ENCODE measurements at regions of chr2 and their contacts with region 1.

Region 1: GRCh38 chr2:71798266-71799012 is 345.1 kb downstream of the DYSF start:
- DNase-seq: peak; percentile 10
- ATAC-seq: peak; percentile 62; the same call in 1 of the 2 replicates
- H3K4me3 ChIP-seq: no peak overlapping the region
- H3K27ac ChIP-seq: no peak overlapping the region
- H3K4me1 ChIP-seq: peaks cover 12% of the 10 kb centered on the region
- H3K27me3 ChIP-seq: peaks cover 10% of the 10 kb centered on the region
- CTCF ChIP-seq: peak; percentile 61
- POLR2A ChIP-seq: no peak
- RAD21 ChIP-seq: peak; percentile 47

Region 2: GRCh38 chr2:71995067-71995665 is 196.7 kb after region 1 on chr2:
- CTCF ChIA-PET with region 1: interaction called, 9 read pairs
- POLR2A ChIA-PET with region 1: no interaction called
- dilution Hi-C with region 1: no loop called
- in situ Hi-C with region 1: no loop called
- intact Hi-C with region 1: loop called (anchors 1 kb)
- DNase-seq: peak; percentile 5
- ATAC-seq: no peak
- H3K4me3 ChIP-seq: no peak overlapping the region
- H3K27ac ChIP-seq: no peak overlapping the region
- H3K4me1 ChIP-seq: no peaks in the 10 kb centered on the region
- H3K27me3 ChIP-seq: peaks cover 2% of the 10 kb centered on the region
- CTCF ChIP-seq: peak; percentile 45
- POLR2A ChIP-seq: no peak
- RAD21 ChIP-seq: 0 out of 2 replicates have a peak, but pooled peaks have one; percentile 4

Region 3: GRCh38 chr2:72173640-72174321 is 375.3 kb after region 1 on chr2:
- CTCF ChIA-PET with region 1: no interaction called
- POLR2A ChIA-PET with region 1: no interaction called
- dilution Hi-C with region 1: no loop called
- in situ Hi-C with region 1: no loop called
- intact Hi-C with region 1: no loop called
- DNase-seq: peak; percentile 35
- ATAC-seq: peak; percentile 67
- H3K4me3 ChIP-seq: no peak overlapping the region
- H3K27ac ChIP-seq: no peak overlapping the region
- H3K4me1 ChIP-seq: no peaks in the 10 kb centered on the region
- H3K27me3 ChIP-seq: no peaks in the 10 kb centered on the region
- CTCF ChIP-seq: no peak
- POLR2A ChIP-seq: no peak
- RAD21 ChIP-seq: no peak